ENCODE measurements at regions of chr9 and their contacts with region 1.

Region 1: DNA sequence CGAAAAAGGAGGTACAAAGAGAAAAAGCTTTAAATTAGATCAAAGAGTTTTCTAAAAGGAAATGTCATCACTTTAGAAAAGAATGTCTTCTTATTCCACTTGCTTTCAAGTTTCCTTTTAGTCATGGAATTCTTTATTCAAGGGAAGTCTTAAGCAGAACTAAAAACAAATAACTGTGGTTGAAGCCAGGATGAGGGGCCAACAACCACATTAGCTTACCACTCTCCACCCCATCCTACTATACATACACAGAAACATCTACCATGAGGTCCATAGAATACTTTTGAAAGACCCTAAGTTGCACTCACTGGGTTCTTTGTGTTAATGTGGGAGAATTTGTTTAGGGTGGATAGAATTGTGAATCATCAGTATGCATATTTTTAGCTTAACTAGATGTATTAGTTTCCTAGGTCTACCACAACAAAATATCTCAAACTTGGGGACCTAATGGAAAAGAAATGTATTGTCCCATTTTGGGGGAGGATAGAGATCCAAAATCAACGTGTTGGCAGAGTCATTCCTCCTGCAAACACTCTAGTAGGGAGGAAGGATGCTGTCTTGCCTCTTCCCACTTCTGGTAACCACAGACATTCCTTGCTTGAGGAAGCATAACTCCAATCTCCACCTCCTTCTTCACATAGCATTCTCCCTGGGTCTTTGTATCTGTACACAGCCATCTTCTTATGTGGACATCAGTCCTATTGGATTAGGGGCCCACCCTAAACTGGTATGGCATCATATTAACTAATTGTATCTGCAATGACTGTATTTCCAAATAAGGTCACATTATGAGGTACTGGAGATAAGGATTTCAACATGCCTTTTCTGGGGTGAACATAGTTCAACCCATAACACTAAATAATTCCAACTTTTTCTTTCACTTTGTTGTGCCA is 239.4 kb downstream of the LURAP1L start:
- DNase-seq: no peak
- ATAC-seq: no peak
- H3K4me3 ChIP-seq: no peak overlapping the region
- H3K27ac ChIP-seq: no peak overlapping the region
- H3K4me1 ChIP-seq: no peaks in the 10 kb centered on the region
- H3K27me3 ChIP-seq: peaks cover 11% of the 10 kb centered on the region; the same call in 1 of the 2 replicates
- CTCF ChIP-seq: no peak
- POLR2A ChIP-seq: no peak
- RAD21 ChIP-seq: no peak

Region 2: DNA sequence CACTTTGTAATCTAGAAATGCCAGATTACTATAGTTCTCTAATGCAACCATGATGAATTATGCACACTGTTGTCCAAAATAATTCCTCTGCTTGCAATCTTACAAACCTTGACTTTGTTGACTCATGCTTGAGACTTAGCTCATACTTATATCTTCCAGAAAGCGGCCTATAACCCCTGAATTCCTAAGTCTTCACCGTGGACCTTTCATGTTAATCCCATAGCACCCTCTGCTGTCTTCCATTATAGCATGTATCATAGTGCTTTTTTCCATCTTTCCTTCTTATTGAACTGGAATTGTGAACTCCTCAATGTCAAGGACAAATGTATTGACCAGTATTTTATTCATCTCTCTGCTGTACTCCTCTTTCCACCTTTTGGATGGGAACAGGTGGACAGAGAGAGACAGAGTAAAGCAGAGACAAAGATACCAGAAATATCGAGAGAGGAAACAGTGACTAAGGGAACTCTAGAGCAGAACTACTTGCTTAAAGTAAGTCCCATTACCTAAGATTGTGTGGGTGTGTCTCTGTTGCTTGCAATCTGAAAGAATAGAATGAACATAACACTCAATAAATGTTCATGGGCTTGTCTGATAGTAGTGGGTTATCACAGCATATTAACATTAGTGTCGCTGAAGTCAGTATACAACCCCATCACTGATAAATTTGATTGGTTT is 129.4 kb before region 1 on chr9:
- CTCF ChIA-PET with region 1: no interaction called
- POLR2A ChIA-PET with region 1: no interaction called
- RAD21 ChIA-PET with region 1: no interaction called
- intact Hi-C with region 1: loop called (anchors 10 kb)
- DNase-seq: peak; percentile 55
- ATAC-seq: peak; percentile 87
- H3K4me3 ChIP-seq: no peak overlapping the region
- H3K27ac ChIP-seq: no peak overlapping the region
- H3K4me1 ChIP-seq: no peaks in the 10 kb centered on the region
- H3K27me3 ChIP-seq: no peaks in the 10 kb centered on the region
- CTCF ChIP-seq: peak; percentile 45 to 88 (median 60)
- POLR2A ChIP-seq: no peak
- RAD21 ChIP-seq: peak; percentile 94